AG04449 (cell line): ENCODE measurements at regions of chr2 and their contacts with region 1.

Region 1: DNA sequence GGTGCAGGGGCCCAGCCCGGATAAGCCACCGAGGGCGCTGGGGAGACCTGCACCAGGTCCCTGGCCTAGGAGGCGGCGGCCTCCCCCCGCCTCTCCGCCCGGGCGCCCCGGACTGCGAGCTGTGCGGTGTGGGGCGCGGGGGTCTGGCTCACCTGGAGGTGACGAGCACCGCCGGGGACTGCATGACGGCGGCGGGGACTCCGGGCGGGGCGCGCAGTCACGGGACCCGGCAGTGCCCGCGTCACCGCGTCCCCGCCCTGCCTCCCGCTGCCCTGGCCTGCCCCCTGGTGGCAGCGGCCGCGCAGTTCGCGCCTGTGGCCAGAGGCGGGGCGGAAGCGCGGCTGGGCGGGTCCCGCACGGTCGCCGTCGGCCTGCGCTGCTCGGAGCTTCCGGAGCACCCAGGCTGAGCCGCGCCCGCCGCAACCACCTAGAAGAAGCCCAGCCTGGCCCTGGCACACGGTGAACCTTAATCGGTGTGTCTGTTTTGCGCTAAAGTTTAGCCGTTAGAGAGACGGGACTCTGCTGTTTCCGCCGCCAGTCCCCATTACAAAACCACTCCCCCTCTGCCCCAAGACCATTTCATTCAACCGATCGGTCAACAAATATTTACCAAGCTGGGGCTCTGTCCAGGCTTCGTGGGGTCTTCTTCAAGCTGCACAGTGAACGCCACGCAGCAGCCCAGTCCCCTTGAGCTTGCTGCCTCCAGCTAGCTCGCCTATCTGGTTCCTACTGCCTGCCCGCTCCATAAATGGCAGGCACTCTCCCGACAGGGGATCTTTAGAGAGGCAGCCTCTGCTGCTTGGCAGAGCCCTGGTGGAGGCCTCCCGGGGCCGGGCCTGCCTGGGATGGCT is at the start of gene HS1BP3:
- DNase-seq: no peak
- H3K4me3 ChIP-seq: peak within 1 kb of the TSS; percentile 91
- CTCF ChIP-seq: peak; percentile 81

Region 2: DNA sequence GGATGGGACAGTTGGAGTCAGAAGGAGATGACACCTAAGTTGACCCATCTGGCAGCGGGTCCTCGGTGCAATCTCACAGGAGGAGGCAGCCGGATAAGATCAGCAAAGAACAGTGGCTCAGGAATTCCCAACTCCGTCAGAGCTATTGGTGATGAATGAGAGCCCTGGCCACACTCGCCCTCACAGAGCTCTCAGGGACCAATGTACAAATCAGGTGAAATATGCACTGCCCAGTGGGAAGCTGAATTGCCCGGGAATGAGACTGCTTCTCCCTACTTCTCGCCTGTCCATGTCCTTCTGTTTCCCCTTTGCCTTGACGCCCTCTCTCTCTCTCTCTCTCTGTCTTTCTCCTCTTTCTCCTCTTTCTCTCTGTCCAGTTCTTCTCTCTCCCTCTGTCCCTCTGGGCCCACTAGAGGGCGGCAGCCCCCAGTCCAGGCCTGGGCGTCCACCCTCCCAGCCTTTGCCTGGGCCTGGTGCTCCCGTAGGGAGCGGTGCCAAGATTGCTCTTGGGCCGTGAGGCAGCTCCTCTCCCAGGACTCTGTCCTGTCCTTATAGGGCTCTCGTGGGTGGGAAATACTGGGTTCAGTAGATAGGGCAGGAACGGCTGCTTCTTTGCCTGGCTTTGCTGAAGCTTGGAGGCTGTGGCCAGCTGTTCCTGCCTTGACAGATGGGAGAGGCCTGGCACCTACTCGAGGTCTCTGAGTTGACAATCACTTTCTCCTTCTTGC is 272.1 kb before region 1 on chr2:
- CTCF ChIA-PET with region 1: interaction called, 31 read pairs
- POLR2A ChIA-PET with region 1: no interaction called
- DNase-seq: no peak
- H3K4me3 ChIP-seq: no peak overlapping the region
- CTCF ChIP-seq: peak; percentile 91

Region 3: GRCh38 chr2:20411361-20411894 is 239.7 kb before region 1 on chr2:
- CTCF ChIA-PET with region 1: interaction called, 65 read pairs
- POLR2A ChIA-PET with region 1: no interaction called
- DNase-seq: no peak
- H3K4me3 ChIP-seq: no peak overlapping the region
- CTCF ChIP-seq: peak; percentile 86

Region 4: DNA sequence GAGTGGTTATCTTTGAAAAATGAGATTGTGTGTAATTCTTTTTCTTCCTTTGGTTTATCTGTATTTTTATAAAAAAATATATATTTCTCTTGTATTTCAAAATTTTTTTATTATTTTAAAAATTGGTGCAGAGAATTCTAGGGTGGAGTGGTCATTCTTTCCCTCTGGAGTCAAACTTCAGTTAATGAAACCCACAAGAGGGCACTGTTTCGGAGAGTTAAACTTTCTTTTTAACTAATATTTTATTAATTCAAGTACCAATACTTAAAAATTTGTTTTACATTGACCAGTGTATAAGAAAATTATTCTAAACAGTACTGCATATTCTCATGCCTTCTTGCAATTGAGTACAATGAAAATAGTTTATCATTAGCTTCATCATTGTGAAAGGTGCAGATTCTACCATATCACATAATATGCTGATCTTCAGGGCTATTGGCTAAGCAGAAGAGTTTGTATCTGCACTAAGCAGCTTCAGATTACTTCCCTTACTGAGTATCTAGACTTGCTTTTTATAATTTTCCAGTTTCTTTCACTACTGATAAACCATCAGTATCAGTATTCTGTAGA is 50.3 kb before region 1 on chr2:
- CTCF ChIA-PET with region 1: interaction called, 10 read pairs
- POLR2A ChIA-PET with region 1: no interaction called
- DNase-seq: no peak
- H3K4me3 ChIP-seq: no peak overlapping the region
- CTCF ChIP-seq: no peak

Region 5: GRCh38 chr2:20675701-20676352 is 24.7 kb after region 1 on chr2:
- CTCF ChIA-PET with region 1: interaction called, 22 read pairs
- POLR2A ChIA-PET with region 1: no interaction called
- DNase-seq: no peak
- H3K4me3 ChIP-seq: no peak overlapping the region
- CTCF ChIP-seq: no peak